Dorsolateral prefrontal cortex (tissue), 120 donors: ENCODE measurements at regions of chr15 and their contacts with region 1.

Region 1: DNA sequence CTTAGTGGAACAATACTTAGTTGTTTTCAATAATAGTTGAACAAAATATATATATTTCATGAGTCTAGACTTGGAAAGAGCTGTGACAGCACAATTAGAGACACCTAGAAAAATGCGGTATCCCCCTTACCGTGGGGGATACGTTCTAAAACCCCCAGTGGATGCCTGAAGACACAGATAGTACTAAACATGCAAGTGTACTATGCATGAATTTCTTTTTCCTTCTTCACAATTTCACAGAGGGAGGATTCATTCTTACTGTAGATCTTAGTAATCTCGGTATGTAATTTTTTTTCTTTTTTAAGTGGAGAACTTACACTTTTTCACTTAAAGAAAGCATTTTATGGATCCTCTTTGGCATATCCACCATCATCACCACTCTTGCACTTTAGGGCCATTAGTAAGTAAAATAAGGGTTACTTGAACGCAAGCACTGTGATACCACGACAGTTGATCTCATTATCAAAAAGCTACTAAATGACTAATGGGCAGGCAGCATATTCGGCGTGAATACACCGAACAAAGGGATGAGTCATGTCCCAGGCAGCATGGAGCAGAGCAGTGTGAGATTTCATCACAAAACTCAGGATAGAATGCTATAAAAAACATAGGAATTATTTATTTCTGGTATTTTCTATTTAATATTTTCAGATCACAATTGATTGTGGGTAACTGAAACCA is 72.3 kb upstream of the ZNF280D start:
- DNase-seq: peak in 4 of 10 donors; percentile 8 to 52 (median 44)
- H3K4me3 ChIP-seq: peak overlapping the region in 56 of 59 donors; percentile 2 to 63 (median 45)
- H3K27ac ChIP-seq: peak overlapping the region in 28 of 59 donors; percentile 4 to 74 (median 44)
- H3K27me3 ChIP-seq: no peaks in the 10 kb centered on the region
- CTCF ChIP-seq: no peak

Region 2: GRCh38 chr15:56739964-56740640 is 65.5 kb before region 1 on chr15:
- intact Hi-C with region 1: loop called in 1 of 2 experiments (anchors 5 kb)
- DNase-seq: no peak
- H3K4me3 ChIP-seq: no peak overlapping the region
- H3K27ac ChIP-seq: no peak overlapping the region
- H3K27me3 ChIP-seq: no peaks in the 10 kb centered on the region
- CTCF ChIP-seq: no peak

Region 3: GRCh38 chr15:56759450-56759845 is 46.2 kb before region 1 on chr15:
- intact Hi-C with region 1: no loop called
- DNase-seq: no peak
- H3K4me3 ChIP-seq: no peak overlapping the region
- H3K27ac ChIP-seq: no peak overlapping the region
- H3K27me3 ChIP-seq: no peaks in the 10 kb centered on the region
- CTCF ChIP-seq: no peak

Region 4: DNA sequence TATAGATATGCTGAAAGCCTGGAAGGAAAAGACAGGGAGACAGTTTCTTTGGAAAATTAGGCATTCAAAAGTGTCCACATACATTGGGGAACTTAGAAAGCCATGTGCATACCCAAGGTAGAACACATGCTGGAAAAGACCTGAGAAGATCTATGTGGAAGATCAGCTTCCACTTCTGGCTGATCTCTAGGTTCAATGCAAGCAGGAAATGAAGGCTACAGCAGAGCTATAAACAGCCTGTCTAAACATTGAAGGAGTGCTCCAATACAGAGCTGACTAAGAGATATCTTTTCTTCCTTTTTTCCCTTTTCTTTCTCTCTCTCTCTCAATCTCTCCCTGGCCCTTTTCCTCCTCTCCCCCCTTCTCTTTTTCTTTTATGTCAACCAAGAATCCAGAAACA is 39.3 kb after region 1 on chr15:
- intact Hi-C with region 1: no loop called
- DNase-seq: no peak
- H3K4me3 ChIP-seq: no peak overlapping the region
- H3K27ac ChIP-seq: no peak overlapping the region
- H3K27me3 ChIP-seq: no peaks in the 10 kb centered on the region
- CTCF ChIP-seq: no peak